Naive thymus-derived CD4-positive, alpha-beta T cell (primary cell): ENCODE measurements at regions of chr14 and their contacts with region 1.

Region 1: DNA sequence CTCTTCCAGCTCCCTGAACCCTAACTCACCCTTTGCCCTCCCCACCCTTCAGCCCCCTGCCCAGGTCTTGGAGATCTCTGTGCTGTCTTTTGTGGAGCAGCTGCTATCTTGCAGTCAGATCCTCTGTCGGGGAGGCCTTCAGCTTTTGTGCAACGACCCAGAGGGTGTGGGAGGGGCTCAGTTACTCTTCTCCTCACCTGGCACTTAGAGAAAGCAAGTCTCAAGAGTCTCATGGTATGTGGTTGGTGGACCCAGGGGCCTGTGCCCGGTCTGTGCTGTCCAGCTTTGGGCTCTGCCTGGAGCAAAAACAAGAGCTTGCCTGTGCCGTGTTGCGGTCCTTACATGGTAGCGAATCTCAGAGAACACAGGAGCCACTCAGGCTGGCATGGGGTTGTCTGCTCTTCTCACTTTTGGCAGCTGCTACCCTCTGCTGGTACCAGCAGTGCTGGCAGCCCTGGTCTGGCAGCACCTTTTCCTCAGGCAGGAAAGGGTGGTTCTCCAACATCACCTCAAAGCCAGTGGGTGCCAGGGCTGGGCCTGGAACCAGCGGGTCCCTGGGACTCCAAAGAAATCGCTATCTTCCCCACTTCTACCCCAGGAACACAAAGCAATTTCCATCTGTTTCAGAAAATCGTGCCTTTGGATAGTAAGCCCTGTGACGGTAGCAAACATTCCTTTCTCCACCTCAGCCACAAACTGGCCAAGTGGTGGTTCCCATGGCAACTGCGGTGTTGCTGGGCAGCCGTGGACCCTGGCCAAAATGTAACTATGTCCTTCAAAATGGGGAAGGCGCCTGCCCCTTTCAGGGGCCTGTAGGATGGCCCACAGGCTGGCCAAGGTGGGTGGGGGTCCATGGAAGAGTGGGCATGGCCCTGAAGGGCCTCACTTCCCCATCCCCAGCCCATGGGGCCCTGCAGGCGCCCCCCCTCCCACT is 90.0 kb downstream of the RIN3 start:
- DNase-seq: peak in 8 of 9 donors; percentile 33 to 85 (median 78)
- ATAC-seq: peak; percentile 95
- H3K4me3 ChIP-seq: no peak overlapping the region
- H3K4me3 Mint-ChIP-seq: peak overlapping the region in 9 of 10 donors; percentile 64 to 85 (median 78)
- H3K27ac ChIP-seq: no peak overlapping the region
- H3K27ac Mint-ChIP-seq: peak overlapping the region in 7 of 9 donors; percentile 48 to 95 (median 81)
- H3K4me1 ChIP-seq: peaks cover 0 to 12% of the 10 kb centered on the region in 2 donors
- H3K4me1 Mint-ChIP-seq: peaks cover 12 to 48% (median 37%) of the 10 kb centered on the region in 7 donors
- H3K27me3 ChIP-seq: no peaks in the 10 kb centered on the region
- H3K27me3 Mint-ChIP-seq: peaks cover 0 to 16% (median 0%) of the 10 kb centered on the region in 5 donors

Region 2: DNA sequence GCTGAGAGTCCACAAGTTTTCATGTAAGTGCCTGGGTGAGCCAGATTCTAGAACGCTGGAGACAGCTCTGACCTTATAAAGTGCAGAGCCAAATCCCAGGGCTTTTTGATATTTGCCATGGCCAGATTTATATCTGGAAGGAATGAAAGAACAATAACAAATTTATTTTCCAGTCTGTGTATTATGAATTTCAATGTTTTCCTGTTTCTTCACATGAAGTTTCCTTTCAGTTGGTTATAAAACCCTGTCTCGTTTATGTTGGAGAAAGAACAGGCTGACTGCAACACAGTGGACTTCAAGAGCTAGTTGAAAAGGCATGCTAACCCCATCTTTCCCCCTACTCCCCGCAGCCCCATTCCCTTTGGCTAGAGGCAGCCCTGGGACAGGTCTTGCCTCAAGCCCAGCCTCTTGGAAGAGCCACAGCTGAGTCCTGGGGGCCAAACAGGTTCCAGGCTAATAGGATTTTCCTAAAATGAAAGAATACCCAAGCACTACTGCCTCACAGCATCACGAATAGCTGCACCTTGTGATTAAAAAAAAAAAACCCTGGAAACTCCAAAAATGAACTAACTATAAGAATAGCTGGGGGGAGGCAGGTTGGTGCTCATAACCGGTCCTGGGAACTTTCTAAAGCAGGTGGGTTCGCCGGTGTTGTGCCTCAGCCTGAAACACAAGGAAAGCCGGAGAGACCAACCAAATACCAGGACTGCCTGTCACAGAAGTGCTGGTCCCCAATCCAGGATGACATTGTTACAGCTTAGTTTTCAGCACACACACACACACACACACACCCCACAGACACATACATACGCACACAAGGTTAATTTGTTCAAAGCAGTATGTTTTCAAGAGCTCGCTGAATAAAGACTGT is 657.6 kb before region 1 on chr14:
- CTCF ChIA-PET with region 1: interaction called, 10 read pairs
- POLR2A ChIA-PET with region 1: no interaction called
- intact Hi-C with region 1: no loop called
- DNase-seq: no peak
- ATAC-seq: no peak
- H3K4me3 ChIP-seq: no peak overlapping the region
- H3K4me3 Mint-ChIP-seq: peak overlapping the region in 7 of 10 donors; percentile 79 to 94 (median 88)
- H3K27ac ChIP-seq: no peak overlapping the region
- H3K27ac Mint-ChIP-seq: no peak overlapping the region
- H3K4me1 ChIP-seq: peaks cover 4 to 12% of the 10 kb centered on the region in 2 donors
- H3K4me1 Mint-ChIP-seq: peaks cover 6 to 19% (median 15%) of the 10 kb centered on the region in 7 donors
- H3K27me3 ChIP-seq: peaks cover 0 to 11% of the 10 kb centered on the region in 2 donors
- H3K27me3 Mint-ChIP-seq: peaks cover 25 to 60% (median 29%) of the 10 kb centered on the region in 5 donors

Region 3: GRCh38 chr14:92135267-92135666 is 468.3 kb before region 1 on chr14:
- CTCF ChIA-PET with region 1: interaction called, 3 read pairs
- POLR2A ChIA-PET with region 1: no interaction called
- intact Hi-C with region 1: loop called in 1 of 2 experiments (anchors 1 kb)
- DNase-seq: peak in 5 of 9 donors; percentile 10 to 37 (median 27)
- ATAC-seq: no peak
- H3K4me3 ChIP-seq: no peak overlapping the region
- H3K4me3 Mint-ChIP-seq: no peak overlapping the region
- H3K27ac ChIP-seq: no peak overlapping the region
- H3K27ac Mint-ChIP-seq: no peak overlapping the region
- H3K4me1 ChIP-seq: no peaks in the 10 kb centered on the region
- H3K4me1 Mint-ChIP-seq: peaks cover 5 to 19% (median 14%) of the 10 kb centered on the region in 7 donors
- H3K27me3 ChIP-seq: no peaks in the 10 kb centered on the region
- H3K27me3 Mint-ChIP-seq: no peaks in the 10 kb centered on the region

Region 4: GRCh38 chr14:92463141-92463540 is 140.4 kb before region 1 on chr14:
- CTCF ChIA-PET with region 1: no interaction called
- POLR2A ChIA-PET with region 1: no interaction called
- intact Hi-C with region 1: loop called in 1 of 2 experiments (anchors 1 kb)
- DNase-seq: peak in 5 of 9 donors; percentile 11 to 24 (median 17)
- ATAC-seq: no peak
- H3K4me3 ChIP-seq: no peak overlapping the region
- H3K4me3 Mint-ChIP-seq: peak overlapping the region in 2 of 10 donors; percentile 27 to 40
- H3K27ac ChIP-seq: no peak overlapping the region
- H3K27ac Mint-ChIP-seq: no peak overlapping the region
- H3K4me1 ChIP-seq: peaks cover 0 to 23% of the 10 kb centered on the region in 2 donors
- H3K4me1 Mint-ChIP-seq: peaks cover 7 to 20% (median 12%) of the 10 kb centered on the region in 7 donors
- H3K27me3 ChIP-seq: no peaks in the 10 kb centered on the region
- H3K27me3 Mint-ChIP-seq: peaks cover 0 to 6% (median 0%) of the 10 kb centered on the region in 5 donors

Region 5: GRCh38 chr14:92551044-92551841 is 52.3 kb before region 1 on chr14:
- CTCF ChIA-PET with region 1: no interaction called
- POLR2A ChIA-PET with region 1: interaction called, 5 read pairs
- intact Hi-C with region 1: loop called in 1 of 2 experiments (anchors 2 kb)
- DNase-seq: no peak
- ATAC-seq: peak; percentile 59
- H3K4me3 ChIP-seq: no peak overlapping the region
- H3K4me3 Mint-ChIP-seq: no peak overlapping the region
- H3K27ac ChIP-seq: no peak overlapping the region
- H3K27ac Mint-ChIP-seq: peak overlapping the region in 3 of 9 donors; percentile 1 to 51 (median 50)
- H3K4me1 ChIP-seq: peaks cover 19 to 20% of the 10 kb centered on the region in 2 donors
- H3K4me1 Mint-ChIP-seq: peaks cover 27 to 54% (median 41%) of the 10 kb centered on the region in 7 donors
- H3K27me3 ChIP-seq: no peaks in the 10 kb centered on the region
- H3K27me3 Mint-ChIP-seq: peaks cover 0 to 10% (median 0%) of the 10 kb centered on the region in 5 donors

Region 6: DNA sequence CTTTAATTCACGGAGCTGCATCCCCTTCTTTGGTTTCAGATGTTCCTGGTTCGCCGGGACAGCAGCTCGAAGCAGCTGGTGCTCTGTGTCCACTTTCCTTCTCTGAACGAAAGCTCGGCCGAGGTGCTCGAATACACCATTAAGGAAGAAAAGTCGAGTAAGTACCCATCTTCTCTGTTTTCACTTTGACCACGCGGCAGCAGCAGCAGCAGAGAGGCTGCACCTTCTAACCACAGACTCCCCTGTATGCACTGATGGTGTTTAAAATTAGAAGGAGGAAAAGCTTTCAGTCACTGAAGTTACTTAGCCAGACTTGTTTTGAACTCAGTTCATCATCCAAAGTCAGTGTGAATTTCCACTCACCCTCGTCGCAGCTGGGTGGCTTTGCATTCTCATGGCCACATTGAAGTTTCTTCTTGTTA is 26.2 kb before region 1 on chr14:
- CTCF ChIA-PET with region 1: interaction called, 9 read pairs
- POLR2A ChIA-PET with region 1: interaction called, 3 read pairs
- intact Hi-C with region 1: loop called in 1 of 2 experiments (anchors 1 kb)
- DNase-seq: peak in 3 of 9 donors; percentile 37 to 46 (median 38)
- ATAC-seq: peak; percentile 78
- H3K4me3 ChIP-seq: peak overlapping the region; percentile 39
- H3K4me3 Mint-ChIP-seq: peak overlapping the region; percentile 70 to 89 (median 80)
- H3K27ac ChIP-seq: peak overlapping the region; percentile 49
- H3K27ac Mint-ChIP-seq: peak overlapping the region; percentile 69 to 93 (median 86)
- H3K4me1 ChIP-seq: peaks cover 36 to 51% of the 10 kb centered on the region in 2 donors
- H3K4me1 Mint-ChIP-seq: peaks cover 36 to 77% (median 68%) of the 10 kb centered on the region in 7 donors
- H3K27me3 ChIP-seq: no peaks in the 10 kb centered on the region
- H3K27me3 Mint-ChIP-seq: peaks cover 0 to 48% (median 0%) of the 10 kb centered on the region in 5 donors

Region 7: DNA sequence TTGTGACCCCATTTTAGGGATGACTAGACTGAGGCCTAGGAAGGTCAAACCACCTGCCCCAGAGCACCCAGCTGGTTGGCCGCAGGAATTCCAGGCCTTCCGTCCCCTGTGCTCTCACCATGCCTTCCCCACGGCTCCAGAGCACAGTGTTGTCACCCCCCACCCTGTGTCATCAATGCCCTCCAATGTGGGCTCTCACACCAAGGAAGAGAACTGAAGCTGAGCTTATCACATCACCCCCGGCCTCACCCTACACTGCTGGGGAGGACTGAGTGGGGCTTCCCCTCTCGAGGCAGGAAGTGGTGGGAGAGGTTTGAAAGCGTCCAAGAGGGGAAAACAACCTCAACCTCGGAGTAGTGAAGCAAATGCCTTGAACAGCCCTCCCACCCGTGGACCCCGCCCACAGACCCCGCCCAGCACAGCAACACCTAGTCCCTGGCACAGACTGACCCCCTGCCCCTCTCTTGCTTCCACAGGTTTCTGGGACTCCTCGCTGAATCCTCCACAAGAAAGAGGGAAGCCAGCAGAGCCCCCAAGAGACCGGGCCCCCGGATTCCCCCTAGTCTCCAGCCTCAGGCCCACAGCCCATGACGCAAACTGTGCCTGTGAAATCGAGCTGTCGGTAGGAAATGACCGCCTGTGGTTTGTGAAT is 47.7 kb after region 1 on chr14:
- CTCF ChIA-PET with region 1: interaction called, 7 read pairs
- POLR2A ChIA-PET with region 1: interaction called, 25 read pairs
- intact Hi-C with region 1: no loop called
- DNase-seq: peak; percentile 50 to 91 (median 87)
- ATAC-seq: peak; percentile 89
- H3K4me3 ChIP-seq: peak overlapping the region; percentile 82
- H3K4me3 Mint-ChIP-seq: peak overlapping the region; percentile 99 to 100 (median 100)
- H3K27ac ChIP-seq: peak overlapping the region; percentile 90
- H3K27ac Mint-ChIP-seq: peak overlapping the region; percentile 94 to 100 (median 99)
- H3K4me1 ChIP-seq: peaks cover 57 to 58% of the 10 kb centered on the region in 2 donors
- H3K4me1 Mint-ChIP-seq: peaks cover 65 to 82% (median 70%) of the 10 kb centered on the region in 7 donors
- H3K27me3 ChIP-seq: no peaks in the 10 kb centered on the region
- H3K27me3 Mint-ChIP-seq: no peaks in the 10 kb centered on the region

Region 8: GRCh38 chr14:92793709-92794546 is 190.4 kb after region 1 on chr14 and contains the start of gene GOLGA5:
- CTCF ChIA-PET with region 1: no interaction called
- POLR2A ChIA-PET with region 1: no interaction called
- intact Hi-C with region 1: no loop called
- DNase-seq: peak; percentile 97 to 100 (median 99)
- ATAC-seq: peak; percentile 97
- H3K4me3 ChIP-seq: peak within 1 kb of the TSS; percentile 98
- H3K4me3 Mint-ChIP-seq: peak within 1 kb of the TSS; percentile 78 to 96 (median 92)
- H3K27ac ChIP-seq: peak within 1 kb of the TSS; percentile 91
- H3K27ac Mint-ChIP-seq: peak within 1 kb of the TSS; percentile 78 to 98 (median 95)
- H3K4me1 ChIP-seq: peaks cover 15 to 20% of the 10 kb centered on the region in 2 donors
- H3K4me1 Mint-ChIP-seq: peaks cover 24 to 45% (median 39%) of the 10 kb centered on the region in 7 donors
- H3K27me3 ChIP-seq: no peaks in the 10 kb centered on the region
- H3K27me3 Mint-ChIP-seq: peaks cover 0 to 9% (median 0%) of the 10 kb centered on the region in 5 donors
- total RNA-seq, gene GOLGA5: 9.7 to 25.8 (median 23.5) TPM